B cell (primary cell): ENCODE measurements at regions of chr5 and their contacts with region 1.

Region 1: DNA sequence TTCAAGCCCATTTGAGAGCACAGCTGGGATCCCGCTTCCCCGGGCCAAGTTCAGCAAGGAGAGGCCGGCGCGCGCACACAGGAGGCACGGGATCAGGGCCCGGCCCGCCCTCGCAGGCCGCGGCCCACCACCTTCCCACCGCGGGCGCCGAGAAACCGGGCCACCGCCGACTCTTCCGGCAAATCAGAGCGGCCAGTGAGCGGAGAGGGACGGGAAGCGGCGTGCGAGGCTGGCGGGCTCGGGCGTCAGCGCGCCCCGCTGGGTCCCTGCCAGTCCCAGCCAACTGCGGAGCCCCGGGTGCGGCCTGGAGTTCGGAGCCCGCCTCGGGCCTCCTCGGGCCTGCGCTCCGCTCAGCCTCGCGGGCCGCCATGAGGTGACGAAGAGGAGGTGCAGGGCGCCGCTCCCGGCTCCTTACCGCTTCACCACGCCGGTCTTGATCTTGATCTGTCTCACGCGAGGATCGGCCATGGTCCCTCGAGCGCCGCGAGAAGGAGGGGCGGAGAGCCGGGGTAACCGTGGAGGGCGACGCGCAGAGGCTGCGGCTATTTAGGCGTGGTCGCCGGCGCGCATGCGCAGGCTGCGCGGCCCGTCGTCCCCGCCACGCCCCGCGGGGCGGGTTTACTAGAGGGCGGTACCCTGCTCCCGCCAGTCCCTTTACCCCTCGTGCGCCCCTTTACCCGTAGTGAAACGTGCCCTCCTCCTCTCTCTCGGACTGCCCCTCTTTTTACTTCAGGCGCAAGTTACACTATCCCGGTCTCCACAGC is at the start of gene TBCA:
- DNase-seq: peak; percentile 98
- ATAC-seq: peak; percentile 85
- H3K4me3 ChIP-seq: peak within 1 kb of the TSS; percentile 55 to 96 (median 74)
- H3K4me3 Mint-ChIP-seq: peak within 1 kb of the TSS; percentile 90
- H3K27ac ChIP-seq: peak within 1 kb of the TSS; percentile 93 to 98
- H3K27ac Mint-ChIP-seq: peak within 1 kb of the TSS; percentile 98
- H3K4me1 ChIP-seq: peaks cover 19 to 22% of the 10 kb centered on the region in 2 donors
- H3K4me1 Mint-ChIP-seq: peaks cover 35% of the 10 kb centered on the region
- H3K27me3 ChIP-seq: no peaks in the 10 kb centered on the region
- H3K27me3 Mint-ChIP-seq: no peaks in the 10 kb centered on the region
- CTCF ChIP-seq: peak; percentile 42
- total RNA-seq, gene TBCA: 94.8 and 110 TPM in 2 replicates

Region 2: DNA sequence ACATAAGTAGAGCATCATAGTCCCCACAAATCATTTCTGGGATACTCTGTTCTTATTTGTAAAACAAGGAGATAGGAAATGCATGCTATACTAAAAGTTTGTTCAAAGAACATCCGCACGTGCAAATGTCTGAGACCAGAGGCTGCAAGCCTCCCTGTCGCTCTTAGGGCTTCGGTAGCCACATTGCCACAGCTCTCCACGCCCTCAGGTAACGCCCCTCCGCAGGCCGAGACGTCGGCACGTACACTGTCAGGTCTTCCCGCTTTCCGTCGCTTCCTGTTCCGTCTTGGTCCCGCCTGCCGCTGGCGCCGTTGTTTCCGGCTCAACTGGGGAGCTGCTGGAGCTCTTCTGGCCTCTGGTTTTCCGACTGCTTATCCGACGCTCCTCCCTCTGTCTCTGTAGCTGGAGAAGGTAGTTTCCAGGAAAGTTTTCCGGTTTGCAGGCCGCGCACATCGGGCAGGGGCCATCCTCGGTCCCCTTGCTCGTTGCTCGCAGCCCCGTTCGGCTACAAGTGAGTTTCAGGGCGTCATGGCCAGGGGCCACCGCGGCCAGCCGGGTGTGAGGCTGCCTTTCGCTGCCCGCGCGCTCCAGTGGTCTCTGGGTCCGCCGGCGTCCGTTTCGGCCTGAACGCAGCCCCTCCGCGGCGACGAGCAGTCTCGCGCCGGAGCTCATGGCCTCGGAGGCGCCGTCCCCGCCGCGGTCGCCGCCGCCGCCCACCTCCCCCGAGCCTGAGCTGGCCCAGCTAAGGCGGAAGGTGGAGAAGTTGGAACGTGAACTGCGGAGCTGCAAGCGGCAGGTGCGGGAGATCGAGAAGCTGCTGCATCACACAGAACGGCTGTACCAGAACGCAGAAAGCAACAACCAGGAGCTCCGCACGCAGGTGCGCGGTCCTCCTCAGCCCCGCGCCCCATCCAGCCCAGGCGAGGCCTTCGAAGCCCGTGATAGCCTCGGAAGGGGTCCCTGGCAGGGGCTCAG is 745.6 kb before region 1 on chr5 and contains the start of gene AGGF1:
- CTCF ChIA-PET with region 1: no interaction called
- POLR2A ChIA-PET with region 1: no interaction called
- intact Hi-C with region 1: loop called (anchors 5 kb)
- DNase-seq: peak; percentile 89
- ATAC-seq: peak; percentile 98
- H3K4me3 ChIP-seq: peak within 1 kb of the TSS; percentile 71 to 99 (median 94)
- H3K4me3 Mint-ChIP-seq: peak within 1 kb of the TSS; percentile 96
- H3K27ac ChIP-seq: peak within 1 kb of the TSS; percentile 65 to 84
- H3K27ac Mint-ChIP-seq: peak within 1 kb of the TSS; percentile 90
- H3K4me1 ChIP-seq: peaks cover 16 to 19% of the 10 kb centered on the region in 2 donors
- H3K4me1 Mint-ChIP-seq: peaks cover 31% of the 10 kb centered on the region
- H3K27me3 ChIP-seq: no peaks in the 10 kb centered on the region
- H3K27me3 Mint-ChIP-seq: peaks cover 7% of the 10 kb centered on the region
- CTCF ChIP-seq: no peak
- total RNA-seq, gene AGGF1: 25.6 and 26.2 TPM in 2 replicates

Region 3: GRCh38 chr5:77638763-77639671 is 137.0 kb before region 1 on chr5:
- CTCF ChIA-PET with region 1: no interaction called
- POLR2A ChIA-PET with region 1: no interaction called
- intact Hi-C with region 1: loop called (anchors 5 kb)
- DNase-seq: peak; percentile 47
- ATAC-seq: peak; percentile 21
- H3K4me3 ChIP-seq: peak overlapping the region in 1 of 5 experiments; percentile 3
- H3K4me3 Mint-ChIP-seq: no peak overlapping the region
- H3K27ac ChIP-seq: no peak overlapping the region
- H3K27ac Mint-ChIP-seq: peak overlapping the region; percentile 66
- H3K4me1 ChIP-seq: peaks cover 31 to 71% of the 10 kb centered on the region in 2 donors
- H3K4me1 Mint-ChIP-seq: peaks cover 11% of the 10 kb centered on the region
- H3K27me3 ChIP-seq: peaks cover 0 to 96% (median 92%) of the 10 kb centered on the region in 4 experiments
- H3K27me3 Mint-ChIP-seq: peaks cover 69% of the 10 kb centered on the region
- CTCF ChIP-seq: no peak

Region 4: GRCh38 chr5:77761606-77762005 is 14.4 kb before region 1 on chr5:
- CTCF ChIA-PET with region 1: no interaction called
- POLR2A ChIA-PET with region 1: no interaction called
- intact Hi-C with region 1: no loop called
- DNase-seq: no peak
- ATAC-seq: no peak
- H3K4me3 ChIP-seq: no peak overlapping the region
- H3K4me3 Mint-ChIP-seq: no peak overlapping the region
- H3K27ac ChIP-seq: no peak overlapping the region
- H3K27ac Mint-ChIP-seq: no peak overlapping the region
- H3K4me1 ChIP-seq: no peaks in the 10 kb centered on the region
- H3K4me1 Mint-ChIP-seq: peaks cover 20% of the 10 kb centered on the region
- H3K27me3 ChIP-seq: no peaks in the 10 kb centered on the region
- H3K27me3 Mint-ChIP-seq: no peaks in the 10 kb centered on the region
- CTCF ChIP-seq: no peak

Region 5: GRCh38 chr5:77852514-77853352 is 76.8 kb after region 1 on chr5:
- CTCF ChIA-PET with region 1: no interaction called
- POLR2A ChIA-PET with region 1: no interaction called
- intact Hi-C with region 1: loop called (anchors 1 kb)
- DNase-seq: peak; percentile 83
- ATAC-seq: peak; percentile 80
- H3K4me3 ChIP-seq: peak overlapping the region; percentile 57 to 82 (median 65)
- H3K4me3 Mint-ChIP-seq: peak overlapping the region; percentile 77
- H3K27ac ChIP-seq: peak overlapping the region; percentile 21 to 32
- H3K27ac Mint-ChIP-seq: peak overlapping the region; percentile 46
- H3K4me1 ChIP-seq: peaks cover 9 to 20% of the 10 kb centered on the region in 2 donors
- H3K4me1 Mint-ChIP-seq: peaks cover 20% of the 10 kb centered on the region
- H3K27me3 ChIP-seq: peaks cover 0 to 3% (median 0%) of the 10 kb centered on the region in 4 experiments
- H3K27me3 Mint-ChIP-seq: peaks cover 9% of the 10 kb centered on the region
- CTCF ChIP-seq: no peak

Region 6: GRCh38 chr5:78221964-78222451 is 446.0 kb after region 1 on chr5:
- CTCF ChIA-PET with region 1: no interaction called
- POLR2A ChIA-PET with region 1: no interaction called
- intact Hi-C with region 1: loop called (anchors 2 kb)
- DNase-seq: peak; percentile 90
- ATAC-seq: peak; percentile 100
- H3K4me3 ChIP-seq: no peak overlapping the region
- H3K4me3 Mint-ChIP-seq: peak overlapping the region; percentile 4
- H3K27ac ChIP-seq: peak overlapping the region; percentile 29 to 33
- H3K27ac Mint-ChIP-seq: peak overlapping the region; percentile 85
- H3K4me1 ChIP-seq: peaks cover 8 to 10% of the 10 kb centered on the region in 2 donors
- H3K4me1 Mint-ChIP-seq: peaks cover 18% of the 10 kb centered on the region
- H3K27me3 ChIP-seq: no peaks in the 10 kb centered on the region
- H3K27me3 Mint-ChIP-seq: no peaks in the 10 kb centered on the region
- CTCF ChIP-seq: peak; percentile 67

Region 7: DNA sequence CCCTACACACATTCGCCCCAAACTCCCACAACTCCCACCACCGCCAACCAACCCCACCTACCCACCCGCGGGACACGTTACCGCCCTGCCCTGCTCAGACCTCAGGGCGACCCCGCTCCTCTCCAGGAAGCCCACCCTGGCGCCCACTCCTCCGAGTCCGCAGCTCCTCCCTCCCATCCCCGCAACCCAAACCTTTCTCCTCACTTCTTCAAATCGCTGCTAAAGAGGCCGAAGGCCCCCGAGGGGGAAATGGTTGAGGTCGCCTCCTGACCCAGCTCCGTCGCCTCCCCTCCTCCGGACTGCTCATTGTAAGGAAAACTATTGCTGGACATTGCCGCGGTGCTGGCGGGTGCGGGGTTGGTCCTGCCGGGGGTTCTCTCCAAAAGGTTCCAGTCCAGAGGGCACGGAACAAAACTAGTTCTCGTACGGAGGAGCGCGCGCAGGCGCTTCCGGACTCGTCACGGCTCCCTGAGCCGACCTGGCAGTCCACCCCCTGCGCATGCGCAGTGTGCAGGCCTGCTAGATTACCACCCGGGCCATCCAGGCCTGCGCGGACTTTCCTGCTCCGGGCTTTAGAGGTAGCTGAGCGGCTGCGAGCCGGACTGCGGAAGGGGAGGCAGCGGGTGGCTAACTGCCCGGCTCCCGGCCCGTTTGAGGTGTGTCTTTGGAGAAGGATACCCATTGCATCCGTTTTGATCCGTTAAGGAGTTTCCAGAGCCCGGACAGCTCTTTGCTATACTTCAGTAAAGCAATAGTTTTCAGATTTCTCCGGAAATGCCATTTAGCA is 518.5 kb after region 1 on chr5 and contains the start of gene AP3B1:
- CTCF ChIA-PET with region 1: no interaction called
- POLR2A ChIA-PET with region 1: no interaction called
- intact Hi-C with region 1: loop called (anchors 2 kb)
- DNase-seq: peak; percentile 98
- ATAC-seq: peak; percentile 91
- H3K4me3 ChIP-seq: peak within 1 kb of the TSS; percentile 74 to 99 (median 87)
- H3K4me3 Mint-ChIP-seq: peak within 1 kb of the TSS; percentile 98
- H3K27ac ChIP-seq: peak within 1 kb of the TSS; percentile 75 to 90
- H3K27ac Mint-ChIP-seq: peak within 1 kb of the TSS; percentile 98
- H3K4me1 ChIP-seq: peaks cover 11 to 12% of the 10 kb centered on the region in 2 donors
- H3K4me1 Mint-ChIP-seq: peaks cover 36% of the 10 kb centered on the region
- H3K27me3 ChIP-seq: no peaks in the 10 kb centered on the region
- H3K27me3 Mint-ChIP-seq: no peaks in the 10 kb centered on the region
- CTCF ChIP-seq: no peak
- total RNA-seq, gene AP3B1: 58.9 and 63.5 TPM in 2 replicates

Region 8: DNA sequence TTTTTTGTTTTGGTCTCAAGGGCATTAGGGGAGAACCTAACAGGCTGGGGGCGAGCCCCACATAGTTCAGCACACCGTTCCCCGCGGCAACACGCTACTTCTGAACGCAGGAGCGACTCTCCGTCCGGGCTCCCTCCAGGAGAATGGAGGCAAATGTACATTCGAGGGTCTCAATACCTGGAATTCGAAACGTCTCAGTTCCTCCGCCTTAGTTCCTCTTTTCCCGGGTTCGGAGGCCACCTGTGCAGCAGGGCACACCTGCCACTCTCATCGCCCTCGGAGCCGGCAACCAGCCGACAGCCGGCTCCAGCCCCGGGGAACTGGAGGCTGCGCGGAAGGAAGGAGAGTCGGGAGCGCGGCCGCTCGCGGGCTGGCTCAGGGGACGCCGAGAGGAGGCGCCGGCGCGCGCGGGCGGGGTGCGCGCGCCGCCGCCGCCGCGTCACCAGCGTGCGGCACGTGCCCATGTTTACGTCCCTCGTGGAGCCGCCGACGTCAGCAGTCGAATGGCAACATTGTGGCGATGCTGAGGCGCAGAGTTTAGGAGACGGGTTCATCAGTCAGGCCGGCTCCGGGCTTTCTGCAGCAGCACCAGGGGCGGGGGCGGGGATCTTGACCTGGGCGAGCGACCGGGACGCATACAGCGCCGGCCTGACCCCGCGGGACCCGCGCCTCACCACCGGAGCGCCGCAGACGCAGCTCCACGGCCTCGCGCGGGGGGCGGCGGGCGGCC is 1459.8 kb after region 1 on chr5 and contains the start of gene JMY:
- CTCF ChIA-PET with region 1: no interaction called
- POLR2A ChIA-PET with region 1: interaction called, 5 read pairs
- intact Hi-C with region 1: loop called (anchors 10 kb)
- DNase-seq: peak; percentile 92
- ATAC-seq: peak; percentile 77
- H3K4me3 ChIP-seq: peak within 1 kb of the TSS; percentile 69 to 84 (median 77)
- H3K4me3 Mint-ChIP-seq: peak within 1 kb of the TSS; percentile 96
- H3K27ac ChIP-seq: peak within 1 kb of the TSS; percentile 86 to 87
- H3K27ac Mint-ChIP-seq: peak within 1 kb of the TSS; percentile 89
- H3K4me1 ChIP-seq: peaks cover 19 to 33% of the 10 kb centered on the region in 2 donors
- H3K4me1 Mint-ChIP-seq: peaks cover 30% of the 10 kb centered on the region
- H3K27me3 ChIP-seq: no peaks in the 10 kb centered on the region
- H3K27me3 Mint-ChIP-seq: no peaks in the 10 kb centered on the region
- CTCF ChIP-seq: no peak
- total RNA-seq, gene JMY: 20.4 and 20.5 TPM in 2 replicates